H1 (cell line): ENCODE measurements at regions of chr15 and their contacts with region 1.

Region 1: DNA sequence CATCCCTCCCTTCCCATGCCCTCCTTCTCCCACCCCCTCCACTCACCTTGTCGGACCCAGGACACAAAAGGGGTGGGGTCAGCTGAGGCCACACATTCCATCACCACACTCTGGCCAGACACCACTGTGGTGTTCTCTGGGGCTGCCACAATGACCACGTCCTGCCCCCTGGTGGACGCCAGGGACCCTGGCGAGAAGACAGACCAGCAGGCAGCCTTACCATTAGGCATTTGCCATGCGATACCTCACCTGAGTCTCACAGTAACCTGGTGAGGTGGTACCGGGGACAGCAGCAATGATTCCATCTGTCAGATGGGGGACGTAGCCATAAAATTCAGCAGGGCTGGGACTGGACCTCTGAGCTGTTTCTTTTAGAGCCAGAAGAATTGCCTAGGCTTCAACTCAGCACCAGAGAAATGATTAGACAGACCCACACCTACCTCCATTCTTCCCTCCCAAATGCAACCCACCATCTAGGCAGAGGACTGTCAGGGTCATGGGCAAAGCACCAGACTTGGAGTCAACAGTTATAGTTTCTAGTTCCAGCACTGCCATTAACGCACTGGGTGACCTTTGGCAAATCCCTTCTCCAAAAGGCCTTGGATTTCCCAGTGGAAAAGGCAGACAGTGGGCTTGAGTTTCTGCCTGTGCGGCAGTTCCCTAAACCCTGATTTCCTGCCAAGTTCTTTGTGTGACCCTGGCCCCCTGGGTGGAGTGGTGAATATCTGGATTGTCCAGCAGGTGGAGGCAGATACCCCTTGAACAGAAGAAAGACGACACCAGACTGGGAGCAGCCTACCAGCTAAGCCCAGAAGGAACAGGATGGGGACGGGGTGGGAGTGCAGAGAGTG is 21.8 kb downstream of the IGDCC4 start:
- DNase-seq: peak; percentile 78 to 94
- H3K4me3 ChIP-seq: peak overlapping the region in 1 of 4 experiments; percentile 18; a peak in 1 of 8 replicates
- H3K27ac ChIP-seq: no peak overlapping the region
- H3K4me1 ChIP-seq: peaks cover 7 to 30% (median 19%) of the 10 kb centered on the region in 4 experiments
- H3K27me3 ChIP-seq: peaks cover 10 to 24% (median 19%) of the 10 kb centered on the region in 4 experiments
- CTCF ChIP-seq: peak; percentile 91 to 95 (median 91)
- EP300 ChIP-seq: 0 out of 3 replicates have a peak, but pooled peaks of 1 of the 2 experiments have one; percentile 44
- POLR2A ChIP-seq: no peak
- RAD21 ChIP-seq: peak; percentile 94 to 99

Region 2: GRCh38 chr15:65368302-65369211 is 32.4 kb before region 1 on chr15:
- CTCF ChIA-PET with region 1: interaction called, 10 read pairs
- POLR2A ChIA-PET with region 1: interaction called, 3 read pairs
- DNase-seq: peak; percentile 60 to 63
- H3K4me3 ChIP-seq: peak overlapping the region in 2 of 4 experiments; percentile 19 to 27; a peak in 3 of 8 replicates
- H3K27ac ChIP-seq: peak overlapping the region; percentile 26
- H3K4me1 ChIP-seq: peaks cover 31 to 56% (median 42%) of the 10 kb centered on the region in 4 experiments
- H3K27me3 ChIP-seq: no peaks in the 10 kb centered on the region
- CTCF ChIP-seq: no peak
- EP300 ChIP-seq: no peak
- POLR2A ChIP-seq: no peak
- RAD21 ChIP-seq: no peak

Region 3: GRCh38 chr15:65384895-65385858 is 15.8 kb before region 1 on chr15:
- CTCF ChIA-PET with region 1: interaction called, 68 read pairs
- POLR2A ChIA-PET with region 1: interaction called, 5 read pairs
- DNase-seq: peak; percentile 70 to 94
- H3K4me3 ChIP-seq: peak overlapping the region in 3 of 4 experiments; percentile 22 to 47 (median 32); a peak in 4 of 8 replicates
- H3K27ac ChIP-seq: no peak overlapping the region
- H3K4me1 ChIP-seq: peaks cover 0 to 15% (median 6%) of the 10 kb centered on the region in 4 experiments; a peak in 6 of 7 replicates
- H3K27me3 ChIP-seq: peaks cover 0 to 1% (median 0%) of the 10 kb centered on the region in 4 experiments; a peak in 2 of 7 replicates
- CTCF ChIP-seq: peak; percentile 86 to 97 (median 96)
- EP300 ChIP-seq: 0 out of 3 replicates have a peak, but pooled peaks of 1 of the 2 experiments have one; percentile 2
- POLR2A ChIP-seq: 0 out of 3 replicates have a peak, but pooled peaks of 1 of the 2 experiments have one; percentile 24
- RAD21 ChIP-seq: peak; percentile 96 to 97

Region 4: GRCh38 chr15:65421360-65422070 is 20.5 kb after region 1 on chr15:
- CTCF ChIA-PET with region 1: interaction called, 180 read pairs
- POLR2A ChIA-PET with region 1: interaction called, 229 read pairs
- DNase-seq: peak in 1 of 2 experiments; percentile 90
- H3K4me3 ChIP-seq: peak overlapping the region; percentile 82 to 91 (median 86)
- H3K27ac ChIP-seq: peak overlapping the region; percentile 71
- H3K4me1 ChIP-seq: peaks cover 16 to 48% (median 31%) of the 10 kb centered on the region in 4 experiments
- H3K27me3 ChIP-seq: peaks cover 0 to 16% (median 9%) of the 10 kb centered on the region in 4 experiments; a peak in 4 of 7 replicates
- CTCF ChIP-seq: no peak
- EP300 ChIP-seq: no peak; a peak in 1 of 3 replicates
- POLR2A ChIP-seq: peak in 1 of 2 experiments; percentile 51; a peak in 2 of 3 replicates
- RAD21 ChIP-seq: peak; percentile 0 to 23; a peak in 2 of 4 replicates

Region 5: GRCh38 chr15:65460741-65461347 is 59.9 kb after region 1 on chr15:
- CTCF ChIA-PET with region 1: interaction called, 21 read pairs
- POLR2A ChIA-PET with region 1: no interaction called
- DNase-seq: no peak
- H3K4me3 ChIP-seq: no peak overlapping the region
- H3K27ac ChIP-seq: no peak overlapping the region
- H3K4me1 ChIP-seq: no peaks in the 10 kb centered on the region
- H3K27me3 ChIP-seq: no peaks in the 10 kb centered on the region
- CTCF ChIP-seq: no peak
- EP300 ChIP-seq: no peak
- POLR2A ChIP-seq: no peak
- RAD21 ChIP-seq: no peak

Region 6: DNA sequence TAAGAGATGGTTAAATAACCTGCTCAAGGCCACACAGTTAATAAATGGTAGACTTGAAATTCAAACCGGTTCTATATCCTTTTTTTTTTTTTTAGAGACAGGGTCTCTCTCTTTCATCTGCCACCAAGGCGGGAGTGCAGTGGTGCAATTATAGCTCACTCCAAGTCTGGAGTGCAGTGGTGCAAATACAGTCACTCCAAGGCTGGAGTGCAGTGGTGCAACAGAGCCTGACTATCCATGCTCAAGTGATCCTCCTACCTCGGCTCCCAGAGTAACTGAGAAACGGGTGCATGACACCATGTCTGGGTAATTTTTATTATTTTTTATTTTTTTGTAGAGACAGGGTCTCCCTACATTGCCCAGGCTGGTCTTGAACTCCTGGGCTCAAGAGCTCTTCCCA is 93.1 kb after region 1 on chr15:
- CTCF ChIA-PET with region 1: interaction called, 13 read pairs
- POLR2A ChIA-PET with region 1: no interaction called
- DNase-seq: no peak
- H3K4me3 ChIP-seq: no peak overlapping the region
- H3K27ac ChIP-seq: no peak overlapping the region
- H3K4me1 ChIP-seq: no peaks in the 10 kb centered on the region
- H3K27me3 ChIP-seq: no peaks in the 10 kb centered on the region
- CTCF ChIP-seq: no peak
- EP300 ChIP-seq: no peak
- POLR2A ChIP-seq: no peak
- RAD21 ChIP-seq: no peak

Region 7: DNA sequence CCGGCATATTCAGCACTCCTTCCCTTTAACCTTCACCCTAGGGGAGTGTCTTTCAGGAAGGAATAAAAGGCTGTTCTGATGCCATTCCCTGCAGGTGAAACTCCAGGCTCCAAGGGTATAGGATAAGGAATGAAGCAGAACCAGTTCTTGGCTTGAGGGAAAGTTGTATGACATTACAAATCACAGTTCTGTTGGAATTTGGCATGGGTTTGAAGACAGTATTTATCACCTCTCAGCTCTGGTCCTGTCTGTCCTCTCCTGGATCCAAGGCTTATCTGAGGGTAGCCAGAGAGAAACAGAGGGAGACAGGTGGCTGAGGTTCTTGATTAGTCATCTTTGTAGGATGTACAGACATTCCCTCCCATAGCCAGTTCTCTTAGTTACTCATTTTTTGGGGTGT is 505.4 kb after region 1 on chr15:
- CTCF ChIA-PET with region 1: no interaction called
- POLR2A ChIA-PET with region 1: no interaction called
- DNase-seq: peak in 1 of 2 experiments; percentile 28
- H3K4me3 ChIP-seq: no peak overlapping the region
- H3K27ac ChIP-seq: no peak overlapping the region
- H3K4me1 ChIP-seq: peaks cover 0 to 5% (median 3%) of the 10 kb centered on the region in 4 experiments; a peak in 4 of 7 replicates
- H3K27me3 ChIP-seq: no peaks in the 10 kb centered on the region
- CTCF ChIP-seq: no peak
- EP300 ChIP-seq: no peak
- POLR2A ChIP-seq: no peak
- RAD21 ChIP-seq: no peak